ENCODE measurements at regions of chr12 and their contacts with region 1.

Region 1: DNA sequence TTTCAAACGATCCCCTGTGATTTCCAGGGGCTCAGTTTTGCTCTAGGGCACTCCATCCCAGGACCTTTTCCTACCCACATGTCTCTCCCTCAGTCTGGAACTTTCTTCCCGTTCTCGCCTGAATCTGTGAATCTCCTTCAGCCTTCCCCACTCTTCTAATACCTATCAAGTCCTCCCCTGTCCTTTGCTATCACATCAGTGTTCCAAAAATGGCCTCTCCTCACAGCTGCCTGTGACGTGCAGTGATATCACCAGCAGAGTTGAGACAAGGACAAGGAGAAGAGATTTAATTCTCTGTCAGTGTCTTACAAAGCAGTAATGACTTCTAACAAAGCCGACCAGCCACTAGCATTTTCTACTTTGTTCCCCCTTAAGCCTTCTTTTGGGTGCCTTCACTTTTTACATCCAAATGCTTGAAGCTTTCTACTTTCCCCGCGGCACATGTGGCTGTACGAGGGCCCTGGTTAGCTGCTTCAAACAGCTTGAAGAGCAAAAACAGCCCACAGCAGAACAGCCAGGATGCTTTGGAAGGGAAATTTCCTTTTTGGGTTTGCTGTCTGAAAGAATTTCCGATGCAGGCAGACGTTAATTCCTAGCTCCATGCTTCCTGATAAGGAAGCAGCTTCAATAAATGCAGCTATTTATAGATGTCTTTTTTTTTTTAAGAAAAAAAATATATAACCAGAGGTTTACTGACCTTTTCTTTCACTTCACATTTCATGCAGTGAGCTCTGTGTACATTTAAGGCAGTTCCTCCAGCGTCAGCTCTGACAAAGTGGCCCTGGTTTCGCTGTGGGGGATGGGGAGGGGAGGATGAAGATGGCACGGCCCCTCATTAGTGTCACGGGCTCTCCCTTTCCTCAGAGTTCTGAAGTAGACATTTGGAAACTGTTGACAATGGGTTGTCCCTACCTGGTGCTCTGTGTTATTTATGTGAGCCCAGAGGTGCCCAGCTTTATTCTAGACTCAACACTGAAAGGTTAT is 109.3 kb downstream of the ETV6 start:
- DNase-seq: peak; percentile 47
- ATAC-seq: peak; percentile 43
- H3K4me3 ChIP-seq: no peak overlapping the region
- H3K27ac ChIP-seq: peak overlapping the region; percentile 92
- H3K4me1 ChIP-seq: peaks cover 35% of the 10 kb centered on the region
- H3K27me3 ChIP-seq: no peaks in the 10 kb centered on the region
- CTCF ChIP-seq: no peak
- POLR2A ChIP-seq: no peak
- RAD21 ChIP-seq: no peak

Region 2: DNA sequence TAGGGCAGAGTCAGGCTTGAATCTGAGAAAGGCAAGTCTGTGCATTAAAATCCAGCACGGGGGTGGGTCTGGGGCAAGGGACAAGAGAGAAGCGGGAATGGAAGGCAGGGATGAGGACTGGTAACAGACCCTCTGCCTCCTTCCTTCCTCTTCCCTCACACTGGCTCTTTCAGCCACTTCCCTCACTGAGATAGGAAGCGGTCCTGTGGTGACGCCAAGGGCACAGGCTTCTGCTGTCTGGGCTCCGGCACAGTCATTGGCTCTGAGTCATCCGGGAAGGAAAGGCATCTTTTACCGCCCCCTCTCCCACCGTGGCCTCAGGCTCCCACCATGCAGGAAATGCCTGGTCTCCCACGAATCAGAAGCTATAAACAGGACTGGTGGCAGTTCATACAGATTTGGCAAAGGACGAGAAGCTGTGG is 39.1 kb before region 1 on chr12:
- CTCF ChIA-PET with region 1: no interaction called
- POLR2A ChIA-PET with region 1: no interaction called
- dilution Hi-C with region 1: no loop called
- in situ Hi-C with region 1: no loop called
- intact Hi-C with region 1: loop called (anchors 2 kb)
- DNase-seq: peak; percentile 98
- ATAC-seq: peak; percentile 91
- H3K4me3 ChIP-seq: no peak overlapping the region
- H3K27ac ChIP-seq: peak overlapping the region; percentile 96
- H3K4me1 ChIP-seq: peaks cover 32% of the 10 kb centered on the region
- H3K27me3 ChIP-seq: no peaks in the 10 kb centered on the region
- CTCF ChIP-seq: no peak
- POLR2A ChIP-seq: peak; percentile 87
- RAD21 ChIP-seq: peak; percentile 27

Measured in IMR-90 (cell line).